Ascending aorta (tissue), 2 donors: ENCODE measurements at regions of chr7 and their contacts with region 1.

Region 1: GRCh38 chr7:97104719-97105238 is 12.7 kb upstream of the SDHAF3 start:
- DNase-seq: peak in 1 of 2 donors; percentile 89
- H3K4me3 ChIP-seq: no peak overlapping the region
- H3K27ac ChIP-seq: no peak overlapping the region
- H3K4me1 ChIP-seq: no peaks in the 10 kb centered on the region
- H3K27me3 ChIP-seq: no peaks in the 10 kb centered on the region
- CTCF ChIP-seq: peak; percentile 59 to 81 (median 75)

Region 2: DNA sequence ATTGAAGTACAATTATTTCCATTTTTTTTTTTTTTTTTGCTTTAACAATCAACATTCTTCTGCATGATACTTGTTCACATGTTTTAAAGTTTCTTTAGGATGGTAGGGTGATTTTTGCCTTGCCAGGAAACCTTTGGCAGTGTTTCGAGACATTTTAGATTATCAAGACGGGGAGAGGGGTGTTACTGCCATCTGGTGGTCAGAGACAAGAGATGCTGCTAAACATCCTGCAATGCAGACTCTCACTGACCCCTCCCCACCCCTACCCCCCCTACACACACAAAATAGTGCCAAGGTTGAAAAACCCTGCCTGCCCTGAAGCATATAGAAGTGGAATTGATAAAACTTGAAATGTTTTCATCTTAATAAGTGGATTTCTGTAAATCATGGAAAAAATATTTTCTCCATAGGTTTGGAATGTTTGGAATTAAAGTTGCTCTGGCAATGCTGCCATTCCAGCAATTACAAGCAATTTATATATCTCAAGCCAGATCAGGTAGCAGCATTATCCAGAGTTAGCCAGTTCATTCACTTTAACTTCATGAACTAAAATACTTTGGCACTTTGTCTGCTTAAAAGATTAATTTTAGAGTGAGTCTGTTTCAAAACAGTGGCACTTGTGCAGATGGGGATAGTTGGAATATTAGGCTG is 74.8 kb after region 1 on chr7:
- intact Hi-C with region 1: loop called (anchors 1 kb)
- DNase-seq: no peak
- H3K4me3 ChIP-seq: no peak overlapping the region
- H3K27ac ChIP-seq: no peak overlapping the region
- H3K4me1 ChIP-seq: no peaks in the 10 kb centered on the region
- H3K27me3 ChIP-seq: no peaks in the 10 kb centered on the region
- CTCF ChIP-seq: peak in 2 of 3 experiments; percentile 69

Region 3: GRCh38 chr7:97835296-97836138 is 730.7 kb after region 1 on chr7:
- intact Hi-C with region 1: loop called (anchors 2 kb)
- DNase-seq: peak in 1 of 2 donors; percentile 72
- H3K4me3 ChIP-seq: no peak overlapping the region
- H3K27ac ChIP-seq: no peak overlapping the region
- H3K4me1 ChIP-seq: no peaks in the 10 kb centered on the region
- H3K27me3 ChIP-seq: no peaks in the 10 kb centered on the region
- CTCF ChIP-seq: peak; percentile 23 to 60 (median 55)